ENCODE measurements at regions of chr4 and their contacts with region 1.

Region 1: DNA sequence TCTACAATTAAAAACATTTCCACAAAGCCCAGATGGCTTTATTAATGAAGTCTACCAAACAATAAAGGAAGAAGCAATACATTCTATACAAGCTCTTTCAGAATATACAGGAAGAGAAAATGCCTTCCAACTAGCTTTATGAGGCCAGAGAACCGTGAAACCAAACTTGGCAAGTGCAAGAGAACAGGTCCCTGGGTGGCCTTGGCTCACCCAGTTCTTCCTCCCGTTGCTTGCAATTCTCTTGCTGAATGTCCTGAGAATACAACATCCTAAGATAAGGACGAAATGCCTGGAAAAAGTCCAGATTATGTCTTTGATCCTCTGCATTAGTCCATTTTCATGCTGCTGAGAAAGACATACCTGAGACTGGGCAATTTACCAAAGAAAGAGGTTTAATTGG is 204.9 kb downstream of the MAD2L1 start:
- DNase-seq: no peak
- ATAC-seq: no peak
- H3K4me3 ChIP-seq: no peak overlapping the region
- H3K27ac ChIP-seq: no peak overlapping the region
- H3K4me1 ChIP-seq: no peaks in the 10 kb centered on the region
- H3K27me3 ChIP-seq: no peaks in the 10 kb centered on the region

Region 2: DNA sequence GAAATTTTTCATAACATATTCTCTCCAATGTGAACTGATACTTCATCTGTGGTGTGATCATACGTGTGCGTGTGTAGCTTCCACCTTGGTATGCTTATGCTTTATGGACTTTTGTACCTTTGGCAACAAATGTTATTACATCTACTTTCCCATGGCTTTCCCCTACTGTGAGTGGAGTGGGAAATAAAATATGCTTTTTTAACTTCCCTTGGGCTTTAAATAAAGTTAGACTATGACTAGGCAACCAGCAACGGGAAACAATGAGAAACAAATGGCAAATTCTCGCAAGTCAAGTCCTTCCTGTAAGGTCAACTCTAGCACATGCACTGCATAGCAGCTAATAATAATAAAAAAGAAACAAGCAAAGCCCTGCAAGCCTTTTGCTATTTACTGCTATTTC is 28.1 kb before region 1 on chr4:
- intact Hi-C with region 1: loop called in 1 of 2 experiments (anchors 5 kb)
- DNase-seq: no peak
- ATAC-seq: peak; percentile 85
- H3K4me3 ChIP-seq: no peak overlapping the region
- H3K27ac ChIP-seq: peak overlapping the region in 1 of 2 donors; percentile 93
- H3K4me1 ChIP-seq: peaks cover 3 to 5% of the 10 kb centered on the region in 2 donors
- H3K27me3 ChIP-seq: no peaks in the 10 kb centered on the region